Activated CD8-positive, alpha-beta memory T cell treated with anti-CD3 and anti-CD28 coated beads, Interleukin-2, amount 10 ng/mL, durations not matched to agents 7 days and 5 days (primary cell): ENCODE measurements at regions of chr2 and their contacts with region 1.

Region 1: GRCh38 chr2:19362755-19363473 is 4.5 kb upstream of the OSR1 start:
- DNase-seq: peak; percentile 55
- ATAC-seq: peak; percentile 43
- H3K4me3 Mint-ChIP-seq: peak overlapping the region; percentile 87
- H3K27ac Mint-ChIP-seq: peak overlapping the region; percentile 7
- H3K4me1 Mint-ChIP-seq: peaks cover 25% of the 10 kb centered on the region
- H3K27me3 Mint-ChIP-seq: peaks cover 83% of the 10 kb centered on the region

Region 2: DNA sequence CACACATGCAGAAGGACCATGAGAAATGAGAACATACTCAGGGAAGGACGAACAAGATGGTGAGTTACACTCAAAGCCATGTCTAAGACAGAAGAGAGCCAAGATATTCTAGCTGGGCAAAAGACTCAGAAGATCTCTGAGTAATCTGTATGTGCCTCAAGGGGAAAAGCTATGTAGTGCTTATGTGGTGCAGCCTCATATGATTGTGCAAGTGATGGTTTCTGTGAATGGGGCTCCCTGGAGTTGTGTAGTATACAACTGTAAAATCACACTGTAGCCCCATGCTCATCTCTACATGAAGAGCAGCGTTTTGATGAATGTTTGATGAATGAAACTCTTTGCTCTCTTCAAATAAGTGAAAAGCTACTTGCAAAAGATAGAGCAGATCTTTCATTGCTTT is 62.0 kb before region 1 on chr2:
- CTCF ChIA-PET with region 1: no interaction called
- DNase-seq: no peak
- ATAC-seq: no peak
- H3K4me3 Mint-ChIP-seq: no peak overlapping the region
- H3K27ac Mint-ChIP-seq: no peak overlapping the region
- H3K4me1 Mint-ChIP-seq: no peaks in the 10 kb centered on the region
- H3K27me3 Mint-ChIP-seq: peaks cover 3% of the 10 kb centered on the region

Region 3: DNA sequence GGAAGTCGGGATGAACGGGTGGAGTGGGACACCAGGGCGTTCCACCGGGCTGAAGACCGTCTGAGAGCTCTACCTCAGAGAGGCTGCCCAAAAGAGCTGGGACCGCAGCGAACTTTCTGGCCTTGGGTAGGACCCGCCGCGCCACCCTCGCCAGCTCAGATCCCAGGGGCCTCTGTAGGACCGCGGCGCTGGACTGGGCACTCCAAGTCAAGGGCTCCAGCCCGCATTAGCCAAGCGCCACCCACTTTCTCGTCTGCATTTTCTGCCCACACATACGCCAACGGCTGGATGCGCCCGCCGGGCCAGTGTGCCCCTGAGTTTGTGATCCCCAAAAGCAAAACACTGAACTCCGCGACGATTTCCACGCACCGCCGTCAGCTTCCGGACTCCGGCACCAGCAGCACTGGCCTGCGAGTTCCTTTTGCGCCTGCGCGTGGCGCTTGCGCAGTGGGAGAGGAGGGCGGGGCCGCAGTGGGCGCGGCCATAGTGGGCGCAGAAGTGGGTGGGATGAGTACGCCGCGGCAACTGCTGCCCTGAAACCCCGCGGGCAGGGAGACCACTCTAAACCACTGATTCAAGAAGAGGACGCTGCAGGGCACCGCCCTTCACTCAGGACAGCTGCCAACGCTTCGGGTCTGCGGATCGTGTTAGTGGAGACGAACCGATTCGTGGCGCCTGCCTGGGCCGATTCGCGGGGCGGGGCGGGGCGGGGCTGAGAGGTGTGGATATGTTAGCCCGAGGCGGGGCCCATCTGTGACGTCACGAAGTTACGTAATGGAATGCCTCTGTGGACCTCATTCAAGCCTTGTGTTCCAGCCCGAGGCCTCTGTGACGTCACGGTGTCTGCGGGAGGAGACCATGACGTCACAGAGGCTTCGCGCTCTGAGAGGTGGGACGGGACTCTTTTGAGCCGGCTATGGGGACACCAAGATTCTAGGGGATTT is 15.0 kb before region 1 on chr2:
- CTCF ChIA-PET with region 1: interaction called, 25 read pairs
- DNase-seq: peak; percentile 97
- ATAC-seq: peak; percentile 95
- H3K4me3 Mint-ChIP-seq: peak overlapping the region; percentile 97
- H3K27ac Mint-ChIP-seq: peak overlapping the region; percentile 98
- H3K4me1 Mint-ChIP-seq: peaks cover 26% of the 10 kb centered on the region
- H3K27me3 Mint-ChIP-seq: peaks cover 35% of the 10 kb centered on the region

Region 4: GRCh38 chr2:19377717-19378116 is 14.8 kb after region 1 on chr2:
- CTCF ChIA-PET with region 1: no interaction called
- DNase-seq: no peak
- ATAC-seq: no peak
- H3K4me3 Mint-ChIP-seq: no peak overlapping the region
- H3K27ac Mint-ChIP-seq: no peak overlapping the region
- H3K4me1 Mint-ChIP-seq: no peaks in the 10 kb centered on the region
- H3K27me3 Mint-ChIP-seq: peaks cover 47% of the 10 kb centered on the region